Activated naive CD4-positive, alpha-beta T cell treated with anti-CD3 and anti-CD28 coated beads for 36 hours (primary cell): ENCODE measurements at regions of chr3 and their contacts with region 1.

Region 1: GRCh38 chr3:48240711-48241491 is at the start of gene ZNF589:
- DNase-seq: peak; percentile 96
- H3K4me3 Mint-ChIP-seq: peak within 1 kb of the TSS; percentile 88
- H3K27ac Mint-ChIP-seq: peak within 1 kb of the TSS; percentile 86
- H3K4me1 Mint-ChIP-seq: peaks cover 28% of the 10 kb centered on the region
- H3K27me3 Mint-ChIP-seq: no peaks in the 10 kb centered on the region
- total RNA-seq, gene ZNF589: 15.8 to 16.3 TPM

Region 2: DNA sequence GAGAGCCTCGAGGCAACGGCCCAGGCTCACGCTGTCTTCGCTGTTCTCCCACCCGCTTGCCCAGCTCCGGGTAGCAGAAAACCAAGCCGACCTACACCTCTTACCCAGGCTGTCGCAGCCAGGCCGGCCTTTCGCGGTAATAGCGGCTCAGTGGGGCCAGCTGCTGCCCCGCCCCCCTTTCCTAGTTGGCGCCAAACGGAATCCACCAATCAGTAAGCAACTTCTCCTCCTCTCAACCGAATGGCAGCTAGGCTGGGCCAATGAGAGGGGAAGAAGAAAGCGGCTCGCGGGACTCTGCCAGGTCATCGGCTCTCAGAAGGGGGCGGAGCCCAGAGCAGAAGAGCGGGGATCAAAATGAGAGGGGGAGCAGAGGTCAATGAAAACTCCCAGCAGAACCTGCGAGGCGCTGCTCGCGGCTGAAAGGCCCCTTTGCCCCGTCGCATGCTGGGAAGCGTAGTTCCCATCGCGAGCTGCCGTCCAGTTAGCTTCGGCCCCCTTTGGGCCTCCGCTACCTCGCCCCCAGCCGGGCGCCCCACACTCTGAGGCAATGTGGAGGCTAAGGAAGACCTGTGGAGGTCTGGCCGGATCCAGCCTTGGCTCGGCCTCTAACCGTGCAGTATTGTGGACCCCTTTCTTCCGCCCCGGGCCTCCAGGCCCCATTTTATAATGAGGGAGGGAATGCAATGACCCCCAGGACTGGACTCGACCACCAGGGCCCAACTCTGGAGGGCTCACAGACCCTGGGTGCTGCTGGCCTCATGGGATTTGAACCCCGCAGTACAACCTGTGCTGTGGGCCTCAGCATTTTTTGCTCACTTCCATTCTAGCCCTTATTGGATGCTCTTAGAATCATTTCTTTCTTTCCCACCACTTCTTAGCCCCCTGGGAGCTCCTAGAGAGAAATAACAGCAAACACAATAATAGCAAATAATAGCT is 52.4 kb before region 1 on chr3 and contains the start of gene CDC25A:
- CTCF ChIA-PET with region 1: interaction called, 6 read pairs
- intact Hi-C with region 1: loop called (anchors 1 kb)
- DNase-seq: peak; percentile 98
- H3K4me3 Mint-ChIP-seq: peak within 1 kb of the TSS; percentile 88
- H3K27ac Mint-ChIP-seq: peak within 1 kb of the TSS; percentile 61
- H3K4me1 Mint-ChIP-seq: peaks cover 17% of the 10 kb centered on the region
- H3K27me3 Mint-ChIP-seq: peaks cover 11% of the 10 kb centered on the region
- total RNA-seq, gene CDC25A: 40.8 to 41.8 TPM

Region 3: GRCh38 chr3:48301020-48301796 is 60.3 kb after region 1 on chr3:
- CTCF ChIA-PET with region 1: interaction called, 6 read pairs
- intact Hi-C with region 1: loop called (anchors 1 kb)
- DNase-seq: peak; percentile 94
- H3K4me3 Mint-ChIP-seq: peak within 1 kb of the TSS; percentile 94
- H3K27ac Mint-ChIP-seq: peak within 1 kb of the TSS; percentile 96
- H3K4me1 Mint-ChIP-seq: peaks cover 28% of the 10 kb centered on the region
- H3K27me3 Mint-ChIP-seq: no peaks in the 10 kb centered on the region

Region 4: GRCh38 chr3:48429317-48429959 is 188.5 kb after region 1 on chr3:
- CTCF ChIA-PET with region 1: no interaction called
- intact Hi-C with region 1: no loop called
- DNase-seq: peak; percentile 49
- H3K4me3 Mint-ChIP-seq: peak overlapping the region; percentile 72
- H3K27ac Mint-ChIP-seq: no peak overlapping the region
- H3K4me1 Mint-ChIP-seq: peaks cover 15% of the 10 kb centered on the region
- H3K27me3 Mint-ChIP-seq: peaks cover 7% of the 10 kb centered on the region